ENCODE measurements at regions of chr19 and their contacts with region 1.

Region 1: GRCh38 chr19:51338563-51339312 is 3.2 kb downstream of the VSIG10L start:
- DNase-seq: peak; percentile 81 to 82
- ATAC-seq: peak; percentile 66 to 88 (median 76)
- H3K4me3 ChIP-seq: peak overlapping the region; percentile 47 to 77 (median 62)
- H3K27ac ChIP-seq: peak overlapping the region in 6 of 10 donors; percentile 19 to 72 (median 34)
- H3K4me1 ChIP-seq: peaks cover 0 to 24% (median 19%) of the 10 kb centered on the region in 9 donors
- H3K27me3 ChIP-seq: no peaks in the 10 kb centered on the region
- CTCF ChIP-seq: peak; percentile 69 to 94 (median 84)

Region 2: DNA sequence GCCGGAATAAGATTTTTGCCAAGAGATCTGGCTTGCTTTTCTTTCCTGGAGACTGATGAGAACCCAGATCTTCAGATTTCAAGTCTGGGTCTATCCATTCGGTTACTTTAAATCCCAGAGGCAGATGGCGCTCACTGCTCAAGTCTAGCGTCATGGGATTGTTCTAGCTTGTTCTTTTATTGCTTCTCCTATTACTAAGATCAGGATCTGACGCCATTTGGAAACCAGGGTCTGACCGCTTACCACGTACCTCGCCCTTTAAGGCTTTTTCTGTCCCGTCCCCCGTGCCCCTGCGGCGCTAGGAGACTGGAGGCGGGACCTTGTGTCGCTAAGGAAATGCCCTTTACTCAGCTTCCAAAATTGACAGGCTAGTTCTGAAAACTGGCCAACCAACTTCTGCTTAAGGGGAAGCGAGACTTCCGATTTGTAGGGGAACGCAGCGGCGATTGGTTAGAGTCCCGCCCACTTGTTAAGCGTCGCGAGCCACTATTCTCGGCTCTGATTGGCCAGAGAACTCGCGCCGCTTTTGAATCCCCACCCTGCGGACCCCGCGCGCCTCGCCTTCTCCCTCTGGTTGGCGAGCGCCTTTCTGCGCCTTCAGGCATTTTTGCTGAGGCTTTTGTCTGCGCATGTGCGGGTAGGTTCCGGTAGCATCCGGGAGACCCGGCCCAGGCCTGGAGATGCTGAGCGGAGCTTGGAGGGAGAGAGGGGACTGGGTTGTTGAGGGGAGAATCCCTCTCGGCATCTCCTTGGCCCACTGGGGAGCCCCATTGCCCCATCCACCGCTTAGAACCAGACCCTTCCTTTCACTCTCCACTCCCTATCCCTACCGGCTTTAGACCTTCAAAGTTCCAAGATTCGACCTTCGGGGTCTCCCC is 55.5 kb after region 1 on chr19:
- intact Hi-C with region 1: loop called in 2 of 10 experiments (anchors 2 to 10 kb)
- DNase-seq: peak; percentile 86 to 96
- ATAC-seq: peak; percentile 96 to 98 (median 98)
- H3K4me3 ChIP-seq: peak overlapping the region in 9 of 10 donors; percentile 15 to 56 (median 46)
- H3K27ac ChIP-seq: peak overlapping the region in 9 of 10 donors; percentile 50 to 90 (median 76)
- H3K4me1 ChIP-seq: peaks cover 3 to 28% (median 7%) of the 10 kb centered on the region in 9 donors
- H3K27me3 ChIP-seq: peaks cover 0 to 9% (median 0%) of the 10 kb centered on the region in 7 donors
- CTCF ChIP-seq: peak in 2 of 9 donors; percentile 19 to 26

Region 3: DNA sequence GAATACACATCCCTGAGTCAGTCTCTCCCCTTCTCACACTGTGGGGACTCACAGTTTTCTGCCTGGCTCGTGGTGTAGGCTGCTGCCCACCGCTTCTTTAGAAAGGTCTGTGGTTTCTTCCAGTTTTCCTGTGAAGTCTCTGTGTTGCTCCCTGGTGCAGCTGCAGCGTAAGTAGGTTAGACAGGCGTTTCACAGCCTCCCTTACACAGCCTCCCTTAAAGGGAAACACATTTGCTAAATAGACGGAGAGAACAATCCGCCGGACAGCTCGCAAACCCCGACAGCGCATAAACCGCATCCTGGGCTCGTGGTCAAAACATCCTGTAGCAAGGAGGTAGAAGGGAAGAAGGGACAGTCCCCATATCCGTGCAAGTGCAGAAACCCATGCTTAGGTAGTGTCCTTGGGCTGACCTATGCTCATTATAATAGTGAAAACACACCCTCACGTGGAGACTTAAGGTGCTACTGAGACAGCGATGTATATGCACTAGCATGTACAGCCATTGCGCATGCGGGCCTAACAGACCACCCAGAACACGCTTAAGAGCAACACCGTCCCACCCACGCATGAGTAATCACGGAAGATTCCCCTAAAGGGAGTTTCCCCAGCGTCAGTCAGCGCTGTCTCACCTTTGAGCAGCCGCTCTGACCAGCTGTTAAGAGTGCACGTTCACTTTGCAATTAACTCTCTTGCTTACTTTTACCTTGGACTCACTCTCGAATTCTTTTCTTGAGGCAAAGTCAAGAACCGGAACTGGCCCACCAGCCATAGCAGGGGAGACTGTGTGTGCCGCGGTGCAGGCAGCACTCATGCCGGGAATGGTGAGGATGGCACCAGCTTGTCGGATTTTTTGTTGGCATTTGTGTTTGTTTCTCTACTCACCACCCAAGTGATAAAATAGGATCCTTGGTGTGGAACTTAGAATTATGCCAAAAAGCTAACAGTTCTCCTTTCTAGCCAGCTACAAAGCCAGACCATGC is 103.0 kb after region 1 on chr19:
- intact Hi-C with region 1: loop called in 6 of 10 experiments (anchors 2 to 5 kb)
- DNase-seq: no peak
- ATAC-seq: peak in 1 of 8 donors; percentile 55
- H3K4me3 ChIP-seq: peak overlapping the region in 1 of 10 donors; percentile 10
- H3K27ac ChIP-seq: peak overlapping the region in 1 of 10 donors; percentile 59
- H3K4me1 ChIP-seq: peaks cover 0 to 29% (median 0%) of the 10 kb centered on the region in 9 donors
- H3K27me3 ChIP-seq: peaks cover 0 to 70% (median 39%) of the 10 kb centered on the region in 7 donors
- CTCF ChIP-seq: no peak

Region 4: GRCh38 chr19:51514866-51515481 is 176.2 kb after region 1 on chr19:
- intact Hi-C with region 1: loop called in 2 of 10 experiments (anchors 5 to 10 kb)
- DNase-seq: no peak
- ATAC-seq: peak in 2 of 8 donors; percentile 54 to 58
- H3K4me3 ChIP-seq: no peak overlapping the region
- H3K27ac ChIP-seq: no peak overlapping the region
- H3K4me1 ChIP-seq: peaks cover 0 to 2% (median 0%) of the 10 kb centered on the region in 9 donors
- H3K27me3 ChIP-seq: peaks cover 0 to 46% (median 34%) of the 10 kb centered on the region in 7 donors
- CTCF ChIP-seq: peak; percentile 49 to 81 (median 74)